Ascending aorta (tissue), 2 donors: ENCODE measurements at regions of chr2 and their contacts with region 1.

Region 1: DNA sequence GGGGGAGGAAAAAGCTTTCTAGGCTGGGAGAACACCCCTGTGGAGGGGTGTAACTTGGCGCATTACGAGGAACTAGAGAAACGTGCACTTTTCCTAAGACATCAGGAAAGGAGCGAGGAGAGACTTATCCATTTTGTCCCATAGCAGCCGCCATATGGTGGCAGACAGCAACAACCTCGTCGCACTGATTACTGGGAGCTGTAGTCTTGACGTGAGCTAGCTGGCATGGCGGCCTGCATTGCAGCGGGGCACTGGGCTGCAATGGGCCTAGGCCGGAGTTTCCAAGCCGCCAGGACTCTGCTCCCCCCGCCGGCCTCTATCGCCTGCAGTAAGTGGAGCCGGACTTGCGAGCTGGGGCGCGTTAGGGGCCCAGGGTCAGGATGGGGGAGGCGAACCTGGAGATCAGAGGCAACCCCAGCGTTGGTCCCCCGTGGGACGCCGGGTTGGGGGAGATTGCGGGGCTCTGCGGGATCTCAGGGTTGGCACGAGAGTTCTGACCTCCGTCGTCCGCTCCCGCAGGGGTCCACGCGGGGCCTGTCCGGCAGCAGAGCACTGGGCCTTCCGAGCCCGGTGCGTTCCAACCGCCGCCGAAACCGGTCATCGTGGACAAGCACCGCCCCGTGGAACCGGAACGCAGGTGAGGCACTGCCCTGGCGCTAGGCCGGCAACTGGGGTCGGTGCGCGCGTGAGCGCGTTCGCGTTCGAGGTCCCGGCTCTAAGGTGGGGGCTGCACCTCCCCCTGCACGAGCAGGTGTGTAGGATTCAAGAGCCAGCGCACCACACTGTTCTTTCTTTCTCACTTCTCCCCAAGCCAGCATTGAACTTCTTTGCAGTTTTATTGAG is at the start of gene MRPL19:
- DNase-seq: peak; percentile 46 to 92
- H3K4me3 ChIP-seq: peak within 1 kb of the TSS; percentile 83 to 92
- H3K27ac ChIP-seq: peak within 1 kb of the TSS; percentile 56 to 71
- H3K4me1 ChIP-seq: peaks cover 0 to 5% of the 10 kb centered on the region in 2 donors
- H3K27me3 ChIP-seq: no peaks in the 10 kb centered on the region
- CTCF ChIP-seq: no peak
- total RNA-seq, gene MRPL19: 166 TPM

Region 2: DNA sequence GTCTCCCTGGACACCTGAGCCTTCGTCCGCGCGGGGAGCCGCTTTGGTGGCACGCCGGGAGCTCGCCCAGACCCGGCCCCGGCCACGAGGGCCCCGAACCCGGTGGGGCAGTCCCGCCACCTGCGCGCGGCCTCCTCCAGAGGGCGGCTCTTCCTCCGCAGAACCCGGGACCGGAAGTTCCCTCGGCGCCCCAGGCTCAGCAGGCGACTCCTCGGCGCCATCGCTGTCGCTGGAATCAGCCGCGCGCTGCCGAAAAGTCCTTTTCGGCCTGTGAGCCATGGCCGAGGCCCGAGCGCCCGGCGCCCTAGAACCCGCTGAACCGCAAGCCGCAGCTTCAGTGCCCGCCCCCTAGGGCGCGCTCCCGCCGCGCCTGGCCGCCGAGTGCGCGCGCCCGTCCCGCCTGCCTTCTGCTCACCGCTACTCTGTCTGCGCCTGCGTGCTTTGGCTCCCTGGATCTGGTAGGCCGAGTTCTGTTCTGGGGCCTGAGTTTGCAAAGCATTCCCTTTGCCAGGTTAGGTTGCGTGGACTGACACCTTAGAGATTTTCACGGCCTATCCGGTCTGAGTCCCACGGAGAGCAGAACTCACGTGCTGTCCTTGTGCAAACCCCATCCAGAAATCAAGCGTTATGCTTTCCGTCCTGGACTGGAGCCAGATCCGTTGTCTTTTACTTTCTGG is 63.9 kb after region 1 on chr2 and contains the start of gene GCFC2:
- intact Hi-C with region 1: loop called (anchors 5 kb)
- DNase-seq: peak; percentile 51 to 91
- H3K4me3 ChIP-seq: peak within 1 kb of the TSS; percentile 77 to 84
- H3K27ac ChIP-seq: peak within 1 kb of the TSS; percentile 86 to 93
- H3K4me1 ChIP-seq: peaks cover 0 to 11% of the 10 kb centered on the region in 2 donors
- H3K27me3 ChIP-seq: no peaks in the 10 kb centered on the region
- CTCF ChIP-seq: peak; percentile 33 to 50 (median 33)
- total RNA-seq, gene GCFC2: 31.0 TPM